ENCODE measurements at regions of chr14 and their contacts with region 1.

Region 1: GRCh38 chr14:64891839-64892375 is 12.2 kb upstream of the SPTB start:
- DNase-seq: no peak
- H3K4me3 ChIP-seq: no peak overlapping the region
- H3K27me3 ChIP-seq: peaks cover 5% of the 10 kb centered on the region; the same call in 1 of the 2 replicates
- CTCF ChIP-seq: peak; percentile 50

Region 2: GRCh38 chr14:64764641-64765520 is 127.0 kb before region 1 on chr14:
- CTCF ChIA-PET with region 1: interaction called, 16 read pairs
- POLR2A ChIA-PET with region 1: no interaction called
- DNase-seq: no peak
- H3K4me3 ChIP-seq: peak overlapping the region; percentile 28
- H3K27me3 ChIP-seq: no peaks in the 10 kb centered on the region
- CTCF ChIP-seq: peak; percentile 96

Region 3: GRCh38 chr14:64788668-64789067 is 103.2 kb before region 1 on chr14:
- CTCF ChIA-PET with region 1: interaction called, 19 read pairs
- POLR2A ChIA-PET with region 1: no interaction called
- DNase-seq: peak; percentile 87
- H3K4me3 ChIP-seq: no peak overlapping the region
- H3K27me3 ChIP-seq: no peaks in the 10 kb centered on the region
- CTCF ChIP-seq: no peak

Region 4: DNA sequence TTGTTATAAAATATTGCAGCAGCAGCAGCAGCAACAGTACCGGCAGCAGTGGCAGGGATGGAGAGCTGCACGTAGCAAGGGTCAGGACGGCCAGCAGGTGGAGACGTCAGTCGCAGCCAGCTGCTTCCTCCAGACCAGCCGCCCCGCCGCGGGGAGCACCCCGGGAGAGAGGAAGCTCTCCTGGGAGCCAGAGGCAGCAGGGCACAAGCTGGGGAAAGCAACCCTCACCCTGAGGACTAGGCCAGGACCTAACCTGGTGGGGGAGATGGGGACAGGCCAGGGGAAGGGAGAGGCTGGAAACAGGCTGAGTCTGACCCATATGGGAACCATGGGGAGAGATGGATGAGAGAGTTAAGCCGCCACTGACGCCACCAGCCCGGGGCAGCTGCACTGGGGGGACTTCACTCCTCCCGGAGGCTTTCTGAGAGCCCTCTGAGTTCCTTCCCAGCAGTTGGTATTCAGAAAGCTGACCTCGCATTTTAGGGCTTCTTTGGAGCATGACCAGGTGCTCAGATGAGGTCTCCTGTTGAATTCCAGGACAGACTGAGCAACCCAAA is 68.5 kb before region 1 on chr14:
- CTCF ChIA-PET with region 1: interaction called, 131 read pairs
- POLR2A ChIA-PET with region 1: no interaction called
- DNase-seq: no peak
- H3K4me3 ChIP-seq: no peak overlapping the region
- H3K27me3 ChIP-seq: peaks cover 1% of the 10 kb centered on the region; the same call in 1 of the 2 replicates
- CTCF ChIP-seq: peak; percentile 88

Region 5: GRCh38 chr14:64841121-64841651 is 50.7 kb before region 1 on chr14:
- CTCF ChIA-PET with region 1: interaction called, 12 read pairs
- POLR2A ChIA-PET with region 1: no interaction called
- DNase-seq: peak; percentile 25
- H3K4me3 ChIP-seq: no peak overlapping the region
- H3K27me3 ChIP-seq: peaks cover 11% of the 10 kb centered on the region
- CTCF ChIP-seq: peak; percentile 60

Region 6: DNA sequence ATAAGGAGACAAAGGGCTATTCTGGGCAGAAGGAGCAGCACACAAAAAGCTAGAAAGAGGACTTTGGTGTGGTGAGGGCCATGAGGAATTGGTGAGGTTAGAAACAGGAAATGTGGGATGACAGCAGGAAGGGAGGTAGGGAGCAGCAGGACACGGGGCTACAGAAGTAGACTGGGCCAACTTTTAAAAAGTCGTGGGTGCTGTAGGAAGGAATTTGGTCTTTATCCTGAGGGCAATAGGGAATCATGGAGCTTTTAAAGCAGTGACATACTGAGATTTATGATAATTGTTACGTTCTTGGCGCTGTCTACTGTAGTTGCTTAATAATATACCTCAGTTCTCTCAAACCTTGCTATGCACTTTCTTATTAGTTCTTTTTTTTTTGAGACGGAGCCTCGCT is 14.1 kb after region 1 on chr14:
- CTCF ChIA-PET with region 1: interaction called, 31 read pairs
- POLR2A ChIA-PET with region 1: interaction called, 5 read pairs
- DNase-seq: no peak
- H3K4me3 ChIP-seq: no peak overlapping the region
- H3K27me3 ChIP-seq: peaks cover 7% of the 10 kb centered on the region
- CTCF ChIP-seq: no peak

Region 7: GRCh38 chr14:65054471-65055085 is 162.7 kb after region 1 on chr14:
- CTCF ChIA-PET with region 1: no interaction called
- POLR2A ChIA-PET with region 1: no interaction called
- DNase-seq: no peak
- H3K4me3 ChIP-seq: no peak overlapping the region
- H3K27me3 ChIP-seq: no peaks in the 10 kb centered on the region
- CTCF ChIP-seq: no peak

Region 8: DNA sequence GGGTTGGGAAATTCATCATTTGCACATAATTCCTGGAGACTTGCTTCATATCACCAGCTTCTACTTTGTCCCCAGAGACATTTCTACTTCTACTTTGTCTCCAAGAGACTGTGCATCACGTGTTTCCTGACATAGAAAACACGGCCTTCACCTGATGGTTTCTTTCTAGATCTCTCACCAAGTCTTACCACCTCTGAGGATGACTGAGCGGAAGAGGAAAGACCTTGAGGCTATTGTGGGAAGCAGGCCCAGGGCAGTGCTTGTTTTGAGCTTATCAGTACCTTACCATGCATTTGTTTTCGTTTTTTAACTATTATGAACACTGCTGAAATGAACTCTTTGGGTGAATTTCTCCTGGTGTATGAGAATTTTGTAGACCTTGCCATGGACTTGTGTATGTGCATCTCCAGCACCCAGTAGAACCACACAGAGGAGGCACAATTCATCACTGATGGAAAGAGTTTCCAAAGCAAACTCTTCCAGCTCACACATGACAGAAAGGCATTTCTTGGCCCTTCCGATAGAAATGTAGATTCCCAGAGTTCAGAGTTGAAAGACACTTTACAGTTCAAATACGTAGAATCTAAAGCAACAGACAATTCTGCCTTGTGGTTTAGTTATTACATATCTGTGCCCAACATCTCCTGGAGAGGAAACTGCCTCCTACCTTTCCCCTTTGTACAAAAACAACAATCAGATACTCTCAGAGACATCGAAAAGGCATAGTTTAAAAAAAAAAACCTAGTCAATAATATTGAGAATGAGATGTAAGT is 955.4 kb after region 1 on chr14:
- CTCF ChIA-PET with region 1: no interaction called
- POLR2A ChIA-PET with region 1: no interaction called
- DNase-seq: no peak
- H3K4me3 ChIP-seq: no peak overlapping the region
- H3K27me3 ChIP-seq: peaks cover 1% of the 10 kb centered on the region; the same call in 1 of the 2 replicates
- CTCF ChIP-seq: no peak

Measured in BJ (cell line).